MCF 10A (cell line): ENCODE measurements at regions of chr3 and their contacts with region 1.

Region 1: GRCh38 chr3:33372218-33373081 is 67.8 kb downstream of the UBP1 start:
- DNase-seq: peak; percentile 85
- H3K4me3 Mint-ChIP-seq: no peak overlapping the region
- H3K27ac Mint-ChIP-seq: no peak overlapping the region
- H3K4me1 Mint-ChIP-seq: peaks cover 10% of the 10 kb centered on the region
- H3K27me3 Mint-ChIP-seq: no peaks in the 10 kb centered on the region
- CTCF ChIP-seq: peak; percentile 87

Region 2: GRCh38 chr3:32947789-32948238 is 424.6 kb before region 1 on chr3:
- CTCF ChIA-PET with region 1: interaction called, 6 read pairs
- POLR2A ChIA-PET with region 1: no interaction called
- intact Hi-C with region 1: loop called (anchors 1 kb)
- DNase-seq: peak; percentile 91
- H3K4me3 Mint-ChIP-seq: no peak overlapping the region
- H3K27ac Mint-ChIP-seq: no peak overlapping the region
- H3K4me1 Mint-ChIP-seq: no peaks in the 10 kb centered on the region
- H3K27me3 Mint-ChIP-seq: no peaks in the 10 kb centered on the region
- CTCF ChIP-seq: peak; percentile 61

Region 3: GRCh38 chr3:33113772-33114621 is 258.5 kb before region 1 on chr3 and contains the start of gene CRTAP:
- CTCF ChIA-PET with region 1: interaction called, 17 read pairs
- POLR2A ChIA-PET with region 1: interaction called, 4 read pairs
- intact Hi-C with region 1: no loop called
- DNase-seq: peak; percentile 94
- H3K4me3 Mint-ChIP-seq: peak within 1 kb of the TSS; percentile 83
- H3K27ac Mint-ChIP-seq: peak within 1 kb of the TSS; percentile 79
- H3K4me1 Mint-ChIP-seq: peaks cover 30% of the 10 kb centered on the region
- H3K27me3 Mint-ChIP-seq: no peaks in the 10 kb centered on the region
- CTCF ChIP-seq: no peak
- total RNA-seq, gene CRTAP: 179 and 182 TPM in 2 replicates

Region 4: GRCh38 chr3:33131331-33132018 is 241.0 kb before region 1 on chr3:
- CTCF ChIA-PET with region 1: interaction called, 334 read pairs
- POLR2A ChIA-PET with region 1: interaction called, 37 read pairs
- intact Hi-C with region 1: loop called (anchors 1 kb)
- DNase-seq: peak; percentile 75
- H3K4me3 Mint-ChIP-seq: no peak overlapping the region
- H3K27ac Mint-ChIP-seq: no peak overlapping the region
- H3K4me1 Mint-ChIP-seq: no peaks in the 10 kb centered on the region
- H3K27me3 Mint-ChIP-seq: no peaks in the 10 kb centered on the region
- CTCF ChIP-seq: peak; percentile 71

Region 5: GRCh38 chr3:33144433-33144832 is 228.0 kb before region 1 on chr3:
- CTCF ChIA-PET with region 1: interaction called, 31 read pairs
- POLR2A ChIA-PET with region 1: interaction called, 4 read pairs
- intact Hi-C with region 1: no loop called
- DNase-seq: no peak
- H3K4me3 Mint-ChIP-seq: no peak overlapping the region
- H3K27ac Mint-ChIP-seq: no peak overlapping the region
- H3K4me1 Mint-ChIP-seq: peaks cover 9% of the 10 kb centered on the region
- H3K27me3 Mint-ChIP-seq: no peaks in the 10 kb centered on the region
- CTCF ChIP-seq: peak; percentile 34

Region 6: DNA sequence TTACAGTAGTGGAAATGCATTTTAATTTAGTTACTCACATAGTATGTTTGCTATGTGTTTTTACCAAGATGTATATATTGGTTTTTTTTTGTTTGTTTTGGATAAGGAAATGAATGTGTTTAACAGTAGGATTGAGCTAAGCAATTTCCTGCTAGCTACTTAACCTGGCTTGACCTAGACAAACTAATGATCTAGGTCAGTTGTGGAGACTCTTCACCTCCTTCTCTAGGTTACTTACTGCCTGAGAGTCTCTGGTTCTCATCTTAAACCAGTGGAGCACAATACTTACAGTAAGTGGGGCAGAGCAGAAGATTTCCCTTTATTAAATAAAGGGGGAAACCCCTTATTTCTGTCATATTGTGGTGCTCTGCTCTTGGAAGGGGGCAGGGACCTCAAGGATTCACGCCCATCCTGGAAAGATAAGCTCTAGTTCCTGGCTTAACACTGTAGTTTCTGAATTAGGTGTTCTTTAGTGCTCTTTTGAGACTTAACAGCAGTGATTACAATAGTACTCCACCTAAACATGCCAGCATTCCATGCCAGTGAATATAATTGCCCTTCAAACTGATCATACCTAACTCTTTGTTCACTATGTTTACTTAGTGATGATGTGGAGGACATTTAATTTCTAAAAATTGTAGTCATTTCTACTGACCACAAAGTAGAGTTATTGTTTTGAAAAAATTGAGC is 12.2 kb before region 1 on chr3:
- CTCF ChIA-PET with region 1: interaction called, 63 read pairs
- POLR2A ChIA-PET with region 1: interaction called, 8 read pairs
- intact Hi-C with region 1: no loop called
- DNase-seq: peak; percentile 54
- H3K4me3 Mint-ChIP-seq: peak overlapping the region; percentile 14
- H3K27ac Mint-ChIP-seq: peak overlapping the region; percentile 70
- H3K4me1 Mint-ChIP-seq: peaks cover 12% of the 10 kb centered on the region
- H3K27me3 Mint-ChIP-seq: no peaks in the 10 kb centered on the region
- CTCF ChIP-seq: no peak

Region 7: DNA sequence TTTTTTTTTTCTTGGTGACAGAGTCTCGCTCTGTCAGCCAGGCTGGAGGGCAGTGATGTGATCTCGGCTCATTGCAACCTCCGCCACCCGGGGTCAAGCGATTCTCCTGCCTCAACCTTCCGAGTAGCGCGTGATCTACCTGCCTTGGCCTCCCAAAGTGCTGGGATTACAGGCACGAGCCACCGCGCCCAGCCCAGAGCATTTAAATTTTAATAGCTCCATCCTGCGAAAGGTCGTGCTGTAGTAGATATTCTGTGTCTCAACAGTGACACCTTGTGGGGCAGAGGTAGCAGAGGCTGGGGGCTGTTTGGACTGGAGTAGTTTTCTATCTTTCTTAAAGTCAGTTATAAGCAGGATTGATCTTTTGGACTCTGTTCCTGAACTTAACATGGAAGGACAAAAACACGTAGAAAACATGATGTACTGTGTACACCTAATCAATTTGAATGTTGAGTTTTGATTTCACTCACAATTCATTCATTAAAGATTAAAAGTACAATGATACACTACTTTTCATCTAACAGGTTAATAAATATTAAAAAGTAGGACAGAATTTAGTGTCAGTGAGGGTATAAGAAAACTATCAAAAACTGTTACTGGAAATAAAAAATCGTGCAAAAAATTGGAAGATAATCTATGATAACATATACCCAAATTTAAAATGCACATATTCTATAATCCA is 415.0 kb after region 1 on chr3:
- CTCF ChIA-PET with region 1: interaction called, 9 read pairs
- POLR2A ChIA-PET with region 1: interaction called, 4 read pairs
- intact Hi-C with region 1: loop called (anchors 5 kb)
- DNase-seq: peak; percentile 71
- H3K4me3 Mint-ChIP-seq: no peak overlapping the region
- H3K27ac Mint-ChIP-seq: no peak overlapping the region
- H3K4me1 Mint-ChIP-seq: peaks cover 19% of the 10 kb centered on the region
- H3K27me3 Mint-ChIP-seq: no peaks in the 10 kb centered on the region
- CTCF ChIP-seq: peak; percentile 77